H1 (cell line): ENCODE measurements at regions of chr13 and their contacts with region 1.

Region 1: GRCh38 chr13:60572003-60572798 is 175.2 kb downstream of the TDRD3 start:
- DNase-seq: no peak
- H3K4me3 ChIP-seq: no peak overlapping the region
- H3K27ac ChIP-seq: peak overlapping the region; percentile 59; the same call in 1 of the 2 replicates
- H3K4me1 ChIP-seq: peaks cover 7 to 19% (median 11%) of the 10 kb centered on the region in 4 experiments; a peak in 6 of 7 replicates
- H3K27me3 ChIP-seq: no peaks in the 10 kb centered on the region
- CTCF ChIP-seq: no peak
- EP300 ChIP-seq: peak in 1 of 2 experiments; percentile 49; a peak in 1 of 3 replicates
- POLR2A ChIP-seq: peak in 1 of 2 experiments; percentile 31; a peak in 1 of 3 replicates
- RAD21 ChIP-seq: no peak

Region 2: GRCh38 chr13:60583911-60584753 is 11.9 kb after region 1 on chr13:
- CTCF ChIA-PET with region 1: interaction called, 9 read pairs
- POLR2A ChIA-PET with region 1: interaction called, 16 read pairs
- DNase-seq: peak; percentile 64 to 84
- H3K4me3 ChIP-seq: peak overlapping the region in 1 of 4 experiments; percentile 30; a peak in 1 of 8 replicates
- H3K27ac ChIP-seq: peak overlapping the region; percentile 64; the same call in 1 of the 2 replicates
- H3K4me1 ChIP-seq: peaks cover 9 to 23% (median 15%) of the 10 kb centered on the region in 4 experiments
- H3K27me3 ChIP-seq: no peaks in the 10 kb centered on the region
- CTCF ChIP-seq: no peak
- EP300 ChIP-seq: peak in 1 of 2 experiments; percentile 68; a peak in 1 of 3 replicates
- POLR2A ChIP-seq: peak in 1 of 2 experiments; percentile 62; a peak in 2 of 3 replicates
- RAD21 ChIP-seq: no peak